GM23248 (cell line): ENCODE measurements at regions of chr9 and their contacts with region 1.

Region 1: GRCh38 chr9:92133949-92134604 is 18.9 kb upstream of the SPTLC1 start:
- DNase-seq: peak; percentile 89
- H3K4me3 ChIP-seq: peak overlapping the region; percentile 64
- H3K27ac ChIP-seq: peak overlapping the region; percentile 85
- H3K4me1 ChIP-seq: peaks cover 8% of the 10 kb centered on the region
- H3K27me3 ChIP-seq: no peaks in the 10 kb centered on the region

Region 2: DNA sequence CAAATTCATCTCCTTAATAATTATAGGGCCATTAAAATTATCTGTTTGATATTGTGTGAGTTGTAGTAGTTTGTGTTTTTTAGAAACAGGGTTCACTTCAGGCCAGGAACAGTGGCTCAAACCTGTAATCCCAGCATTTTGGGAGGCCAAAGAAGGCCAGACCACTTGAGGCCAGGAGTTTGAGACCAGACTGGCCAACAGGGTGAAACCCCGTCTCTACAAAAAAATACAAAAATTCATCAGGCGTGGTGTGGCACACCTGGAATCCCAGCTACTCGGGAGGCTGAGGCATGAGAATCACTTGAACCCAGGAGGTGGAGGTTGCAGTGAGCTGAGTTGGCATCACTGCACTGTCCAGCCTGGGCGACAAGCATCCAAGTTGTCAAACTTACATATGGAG is 102.4 kb after region 1 on chr9:
- in situ Hi-C with region 1: loop called (anchors 5 kb)
- DNase-seq: no peak
- H3K4me3 ChIP-seq: no peak overlapping the region
- H3K27ac ChIP-seq: no peak overlapping the region
- H3K4me1 ChIP-seq: peaks cover under 1% of the 10 kb centered on the region
- H3K27me3 ChIP-seq: no peaks in the 10 kb centered on the region

Region 3: GRCh38 chr9:92963831-92964626 is 830.0 kb after region 1 on chr9:
- in situ Hi-C with region 1: no loop called
- DNase-seq: no peak
- H3K4me3 ChIP-seq: no peak overlapping the region
- H3K27ac ChIP-seq: no peak overlapping the region
- H3K4me1 ChIP-seq: no peaks in the 10 kb centered on the region
- H3K27me3 ChIP-seq: no peaks in the 10 kb centered on the region